ENCODE measurements at regions of chr2 and their contacts with region 1.

Region 1: DNA sequence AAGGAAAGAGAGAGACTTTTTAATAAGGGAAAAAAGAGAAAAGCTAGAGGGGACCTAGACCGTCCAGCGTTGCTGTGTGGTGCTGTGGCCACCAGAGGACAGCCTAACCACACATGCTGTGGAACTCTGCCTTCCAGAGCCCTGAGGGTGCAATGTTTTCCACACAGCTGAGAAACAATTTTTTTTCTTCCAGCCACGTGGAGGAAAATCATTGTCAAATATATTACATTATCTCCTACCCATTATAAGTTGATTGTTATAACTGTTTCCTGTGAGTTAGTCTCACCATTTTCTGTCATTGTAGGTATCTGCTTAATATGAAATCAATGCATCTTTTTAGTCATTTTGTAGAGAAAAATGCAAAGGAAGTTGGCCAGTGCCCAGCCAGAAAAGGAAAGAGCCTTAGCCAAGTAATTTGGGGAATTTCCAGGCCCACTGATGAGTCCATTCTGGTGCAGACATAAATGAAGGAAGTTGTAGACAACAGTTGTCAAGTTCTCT is 5.9 kb upstream of the MRPL19 start:
- DNase-seq: peak; percentile 66
- H3K4me3 ChIP-seq: peak overlapping the region in 1 of 2 experiments; percentile 42; a peak in 1 of 4 replicates
- H3K27ac ChIP-seq: peak overlapping the region; percentile 17 to 74; a peak in 3 of 4 replicates
- H3K4me1 ChIP-seq: peaks cover 0 to 9% of the 10 kb centered on the region in 2 experiments; a peak in 2 of 4 replicates
- H3K27me3 ChIP-seq: no peaks in the 10 kb centered on the region; the same call in 1 of the 2 replicates
- CTCF ChIP-seq: peak; percentile 99
- EP300 ChIP-seq: peak in 1 of 2 experiments; percentile 43; a peak in 2 of 4 replicates
- RAD21 ChIP-seq: peak; percentile 97

Region 2: GRCh38 chr2:75627895-75628504 is 12.7 kb before region 1 on chr2:
- CTCF ChIA-PET with region 1: interaction called, 30 read pairs
- POLR2A ChIA-PET with region 1: no interaction called
- DNase-seq: peak; percentile 64
- H3K4me3 ChIP-seq: peak overlapping the region in 1 of 2 experiments; percentile 53; a peak in 1 of 4 replicates
- H3K27ac ChIP-seq: no peak overlapping the region
- H3K4me1 ChIP-seq: peaks cover 5 to 8% of the 10 kb centered on the region in 2 experiments
- H3K27me3 ChIP-seq: no peaks in the 10 kb centered on the region
- CTCF ChIP-seq: peak; percentile 97
- EP300 ChIP-seq: no peak
- RAD21 ChIP-seq: peak; percentile 87

Region 3: GRCh38 chr2:75667884-75668283 is 27.2 kb after region 1 on chr2:
- CTCF ChIA-PET with region 1: interaction called, 11 read pairs
- POLR2A ChIA-PET with region 1: no interaction called
- DNase-seq: no peak
- H3K4me3 ChIP-seq: no peak overlapping the region
- H3K27ac ChIP-seq: no peak overlapping the region
- H3K4me1 ChIP-seq: no peaks in the 10 kb centered on the region; a peak in 1 of 4 replicates
- H3K27me3 ChIP-seq: no peaks in the 10 kb centered on the region
- CTCF ChIP-seq: no peak
- EP300 ChIP-seq: no peak
- RAD21 ChIP-seq: no peak

Region 4: GRCh38 chr2:75676464-75676863 is 35.8 kb after region 1 on chr2:
- CTCF ChIA-PET with region 1: interaction called, 23 read pairs
- POLR2A ChIA-PET with region 1: no interaction called
- DNase-seq: no peak
- H3K4me3 ChIP-seq: no peak overlapping the region
- H3K27ac ChIP-seq: no peak overlapping the region
- H3K4me1 ChIP-seq: peaks cover 0 to 3% of the 10 kb centered on the region in 2 experiments; a peak in 2 of 4 replicates
- H3K27me3 ChIP-seq: no peaks in the 10 kb centered on the region
- CTCF ChIP-seq: no peak
- EP300 ChIP-seq: no peak
- RAD21 ChIP-seq: no peak

Region 5: GRCh38 chr2:75716406-75716805 is 75.7 kb after region 1 on chr2:
- CTCF ChIA-PET with region 1: interaction called, 16 read pairs
- POLR2A ChIA-PET with region 1: no interaction called
- DNase-seq: no peak
- H3K4me3 ChIP-seq: no peak overlapping the region
- H3K27ac ChIP-seq: no peak overlapping the region
- H3K4me1 ChIP-seq: no peaks in the 10 kb centered on the region
- H3K27me3 ChIP-seq: no peaks in the 10 kb centered on the region
- CTCF ChIP-seq: peak; percentile 18; the same call in 1 of the 2 replicates
- EP300 ChIP-seq: no peak
- RAD21 ChIP-seq: peak; percentile 48